ENCODE measurements at regions of chr14 and their contacts with region 1.

Region 1: DNA sequence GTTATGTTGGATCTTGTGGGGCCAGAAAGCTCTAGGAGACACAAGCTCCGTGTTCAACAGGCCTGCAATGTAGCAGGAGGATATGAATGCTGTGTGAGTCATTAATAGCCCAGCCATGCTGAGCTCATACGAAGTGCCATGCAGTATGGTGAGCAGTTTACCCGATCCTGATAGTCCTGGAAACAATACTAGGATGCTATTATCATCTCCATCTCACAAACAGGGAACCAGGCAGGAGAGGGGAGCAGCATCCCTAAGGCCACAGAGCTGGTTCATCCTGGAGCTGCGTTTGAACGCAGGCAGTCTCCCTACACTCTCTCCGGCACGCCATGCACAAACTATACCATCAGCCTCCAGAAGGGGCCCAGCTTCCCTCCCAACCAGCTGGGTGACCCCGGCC is 20.5 kb downstream of the TTC7B start:
- DNase-seq: no peak
- H3K4me3 ChIP-seq: no peak overlapping the region
- H3K27ac ChIP-seq: no peak overlapping the region
- H3K4me1 ChIP-seq: peaks cover 0 to 6% (median 0%) of the 10 kb centered on the region in 4 donors
- H3K27me3 ChIP-seq: no peaks in the 10 kb centered on the region
- CTCF ChIP-seq: no peak
- EP300 ChIP-seq: no peak
- POLR2A ChIP-seq: no peak

Region 2: DNA sequence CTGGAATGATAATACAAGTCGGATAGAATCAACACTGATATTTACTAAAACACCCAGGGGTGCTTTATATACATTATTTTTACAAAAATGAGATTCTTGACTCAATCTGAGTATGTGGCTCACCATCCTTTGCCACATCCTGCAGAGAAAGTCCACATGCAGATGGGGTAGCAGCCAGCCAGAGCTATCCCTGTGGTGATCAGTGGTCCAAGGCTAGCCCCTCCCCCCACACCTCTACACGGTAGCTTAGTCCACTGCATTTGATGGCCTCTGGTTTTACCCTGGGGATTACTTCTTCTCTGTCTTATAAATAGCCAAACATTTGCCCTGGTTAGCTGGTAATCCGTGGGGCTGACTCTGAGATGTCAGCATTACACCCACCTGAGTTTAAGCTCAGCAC is 48.6 kb after region 1 on chr14:
- in situ Hi-C with region 1: no loop called
- intact Hi-C with region 1: loop called (anchors 2 kb)
- DNase-seq: no peak
- H3K4me3 ChIP-seq: no peak overlapping the region
- H3K27ac ChIP-seq: no peak overlapping the region
- H3K4me1 ChIP-seq: no peaks in the 10 kb centered on the region
- H3K27me3 ChIP-seq: no peaks in the 10 kb centered on the region
- CTCF ChIP-seq: no peak
- EP300 ChIP-seq: no peak
- POLR2A ChIP-seq: no peak

Measured in transverse colon (tissue), 4 donors.